Sigmoid colon (tissue), 7 donors: ENCODE measurements at regions of chr7 and their contacts with region 1.

Region 1: DNA sequence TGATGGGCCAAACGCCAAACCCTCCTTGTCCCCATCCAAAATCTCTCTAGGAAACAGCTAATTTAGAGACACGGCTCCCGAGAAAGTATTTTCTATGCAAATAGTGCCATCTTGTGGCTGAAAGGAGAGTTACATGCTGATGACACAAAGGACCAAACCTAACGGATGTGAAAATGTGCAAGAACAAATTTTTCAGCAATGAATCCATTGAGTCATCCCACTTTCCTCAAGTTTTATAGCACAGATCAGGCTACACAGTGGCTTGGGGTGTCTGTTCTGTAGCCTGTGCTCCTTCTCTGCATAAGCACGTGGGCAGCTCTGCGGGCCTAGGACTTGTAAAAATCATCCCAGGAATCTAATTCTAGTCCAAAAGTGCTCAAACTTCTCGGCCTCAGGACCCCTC is 154.8 kb upstream of the PRR15 start:
- DNase-seq: no peak
- H3K4me3 ChIP-seq: no peak overlapping the region
- H3K27ac ChIP-seq: no peak overlapping the region
- H3K4me1 ChIP-seq: no peaks in the 10 kb centered on the region
- H3K27me3 ChIP-seq: no peaks in the 10 kb centered on the region
- CTCF ChIP-seq: peak; percentile 74 to 88 (median 80)
- EP300 ChIP-seq: no peak
- POLR2A ChIP-seq: no peak

Region 2: DNA sequence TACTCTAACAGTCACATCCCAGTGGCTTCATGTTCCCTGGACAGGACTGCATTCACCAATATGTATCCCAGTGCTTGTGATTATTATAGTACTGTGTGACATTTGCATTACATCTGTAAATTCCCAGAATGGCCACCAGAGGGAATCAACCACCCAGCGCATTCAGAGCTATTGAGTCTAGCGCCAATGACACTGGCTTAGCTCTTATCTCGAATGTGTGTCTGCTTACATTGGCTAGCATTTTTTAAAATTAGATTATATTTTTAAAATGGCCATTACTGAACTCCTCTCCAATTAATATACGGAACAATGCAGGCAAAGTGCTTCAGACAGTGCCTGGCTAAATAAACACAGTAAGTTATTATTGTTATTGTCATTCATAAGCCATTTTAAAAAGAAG is 487.0 kb before region 1 on chr7:
- intact Hi-C with region 1: loop called (anchors 1 kb)
- DNase-seq: peak; percentile 71
- H3K4me3 ChIP-seq: no peak overlapping the region
- H3K27ac ChIP-seq: no peak overlapping the region
- H3K4me1 ChIP-seq: peaks cover 0 to 19% (median 13%) of the 10 kb centered on the region in 4 donors
- H3K27me3 ChIP-seq: peaks cover 0 to 19% (median 0%) of the 10 kb centered on the region in 3 donors
- CTCF ChIP-seq: peak; percentile 58 to 92 (median 88)
- EP300 ChIP-seq: no peak
- POLR2A ChIP-seq: no peak

Region 3: GRCh38 chr7:29105752-29106668 is 302.8 kb before region 1 on chr7:
- intact Hi-C with region 1: loop called (anchors 5 kb)
- DNase-seq: no peak
- H3K4me3 ChIP-seq: no peak overlapping the region
- H3K27ac ChIP-seq: no peak overlapping the region
- H3K4me1 ChIP-seq: no peaks in the 10 kb centered on the region
- H3K27me3 ChIP-seq: no peaks in the 10 kb centered on the region
- CTCF ChIP-seq: peak; percentile 57 to 77 (median 72)
- EP300 ChIP-seq: no peak
- POLR2A ChIP-seq: no peak

Region 4: DNA sequence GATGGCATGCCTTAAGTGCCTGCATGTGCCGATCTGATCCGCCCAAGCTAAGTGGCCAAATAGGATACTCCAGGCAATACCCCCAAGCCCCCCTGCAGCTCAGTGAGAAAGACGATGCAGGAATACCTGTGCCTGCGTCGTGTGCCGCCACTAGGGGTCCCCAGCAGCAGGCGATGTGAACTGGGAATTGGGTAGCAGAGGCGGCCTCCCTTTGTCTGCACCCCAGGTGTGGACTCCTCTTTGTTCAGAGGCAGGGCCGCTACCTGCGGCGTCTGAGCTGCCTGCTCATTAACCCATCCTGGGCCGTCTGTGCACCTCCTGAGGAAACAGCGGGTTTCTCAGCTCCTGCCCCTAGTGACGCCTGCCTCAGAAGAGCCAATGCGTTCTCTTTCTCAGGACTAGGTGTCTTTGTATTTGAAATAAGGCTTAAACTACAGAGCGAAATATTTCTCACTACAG is 219.1 kb before region 1 on chr7:
- intact Hi-C with region 1: loop called (anchors 2 kb)
- DNase-seq: peak; percentile 73
- H3K4me3 ChIP-seq: no peak overlapping the region
- H3K27ac ChIP-seq: no peak overlapping the region
- H3K4me1 ChIP-seq: peaks cover 0 to 11% (median 9%) of the 10 kb centered on the region in 4 donors
- H3K27me3 ChIP-seq: peaks cover 0 to 39% (median 11%) of the 10 kb centered on the region in 3 donors
- CTCF ChIP-seq: peak in 3 of 4 experiments; percentile 60 to 76 (median 76)
- EP300 ChIP-seq: no peak
- POLR2A ChIP-seq: no peak